ENCODE measurements at regions of chr5 and their contacts with region 1.

Region 1: DNA sequence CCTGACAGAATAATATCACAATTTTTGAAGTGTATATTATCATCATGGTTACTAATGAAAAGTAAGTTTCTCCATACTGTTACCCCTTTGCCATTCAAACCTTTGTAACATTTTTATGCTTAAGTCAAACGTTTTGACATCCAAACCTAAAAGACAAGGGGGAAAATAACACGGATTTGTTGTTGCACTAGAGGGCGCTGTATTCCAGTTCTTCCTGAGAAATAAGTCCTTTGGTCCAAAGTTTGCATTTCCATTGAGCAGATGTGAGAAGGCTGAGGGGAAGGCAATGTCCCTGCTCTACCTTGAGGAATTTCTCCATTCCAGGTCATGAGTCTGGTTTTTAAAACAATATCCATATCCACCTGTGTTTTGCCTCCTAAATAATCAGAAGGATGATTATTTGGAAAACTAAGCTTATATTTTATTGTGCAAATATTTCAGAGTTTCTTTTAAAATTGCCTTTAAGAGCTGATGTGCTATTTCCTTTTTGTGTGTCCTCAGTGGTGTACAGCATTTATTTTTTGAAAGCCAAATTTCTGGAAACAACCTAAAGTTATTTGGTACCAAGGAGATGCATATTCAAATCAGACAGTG is 9.7 kb downstream of the LECT2 start:
- DNase-seq: no peak
- H3K4me3 ChIP-seq: no peak overlapping the region
- H3K27ac ChIP-seq: no peak overlapping the region
- H3K4me1 ChIP-seq: peaks cover 0 to 6% (median 4%) of the 10 kb centered on the region in 4 donors
- H3K27me3 ChIP-seq: no peaks in the 10 kb centered on the region
- CTCF ChIP-seq: peak; percentile 72 to 78 (median 76)
- EP300 ChIP-seq: no peak
- POLR2A ChIP-seq: no peak

Region 2: GRCh38 chr5:135810188-135810943 is 134.7 kb before region 1 on chr5:
- intact Hi-C with region 1: no loop called
- DNase-seq: no peak
- H3K4me3 ChIP-seq: no peak overlapping the region
- H3K27ac ChIP-seq: no peak overlapping the region
- H3K4me1 ChIP-seq: no peaks in the 10 kb centered on the region
- H3K27me3 ChIP-seq: peaks cover 0 to 10% (median 0%) of the 10 kb centered on the region in 4 donors
- CTCF ChIP-seq: no peak
- EP300 ChIP-seq: no peak
- POLR2A ChIP-seq: no peak

Region 3: GRCh38 chr5:135900276-135900675 is 44.8 kb before region 1 on chr5:
- intact Hi-C with region 1: no loop called
- DNase-seq: peak; percentile 70
- H3K4me3 ChIP-seq: no peak overlapping the region
- H3K27ac ChIP-seq: no peak overlapping the region
- H3K4me1 ChIP-seq: no peaks in the 10 kb centered on the region
- H3K27me3 ChIP-seq: peaks cover 0 to 9% (median 0%) of the 10 kb centered on the region in 4 donors
- CTCF ChIP-seq: no peak
- EP300 ChIP-seq: no peak
- POLR2A ChIP-seq: no peak

Region 4: DNA sequence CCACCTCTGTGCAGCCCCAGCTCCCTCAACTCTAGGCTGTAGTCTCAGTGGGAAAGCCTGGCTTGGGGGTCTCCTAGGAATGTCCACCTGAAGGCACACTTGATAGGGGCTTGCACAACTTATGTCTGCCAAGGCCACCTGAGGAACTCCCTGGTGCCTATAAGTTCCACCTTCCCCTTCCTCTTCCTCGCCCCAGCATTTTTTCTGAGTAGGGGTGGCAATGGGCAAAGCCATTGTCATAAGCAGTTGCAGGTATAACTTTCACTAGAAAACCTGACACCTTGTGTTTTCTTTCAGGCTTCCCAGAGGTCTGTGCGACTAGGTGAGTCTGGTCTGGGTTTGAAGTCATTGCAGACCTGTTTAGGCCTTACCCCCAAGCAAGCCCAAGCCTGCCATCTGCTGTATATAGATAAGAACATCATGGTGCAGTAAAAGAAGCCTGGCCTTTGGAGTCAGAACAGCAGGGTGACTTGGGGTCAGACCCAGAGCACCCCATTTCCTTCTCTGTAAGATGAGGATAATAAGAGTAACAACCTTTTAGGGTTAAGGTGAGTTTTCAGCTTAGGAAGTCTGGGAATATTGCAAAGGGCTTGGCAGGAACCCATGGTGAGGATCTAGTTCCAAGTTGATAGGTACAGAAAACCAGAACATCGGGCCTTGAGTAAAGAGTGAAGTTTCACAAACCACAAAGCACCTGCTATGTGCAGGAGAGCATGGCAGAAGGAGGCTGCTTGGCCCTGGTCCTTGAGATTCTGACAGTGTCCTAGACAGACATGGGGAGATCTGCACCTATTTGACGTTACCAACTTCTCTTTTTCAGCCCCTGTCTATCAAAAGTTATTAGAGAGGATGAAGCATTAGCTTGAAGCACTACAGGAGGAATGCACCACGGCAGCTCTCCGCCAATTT is 117.6 kb after region 1 on chr5:
- intact Hi-C with region 1: loop called (anchors 5 kb)
- DNase-seq: no peak
- H3K4me3 ChIP-seq: no peak overlapping the region
- H3K27ac ChIP-seq: peak overlapping the region in 1 of 4 donors; percentile 1
- H3K4me1 ChIP-seq: peaks cover 26 to 63% (median 54%) of the 10 kb centered on the region in 4 donors
- H3K27me3 ChIP-seq: no peaks in the 10 kb centered on the region
- CTCF ChIP-seq: peak; percentile 36 to 57 (median 52)
- EP300 ChIP-seq: no peak
- POLR2A ChIP-seq: no peak

Region 5: GRCh38 chr5:136080483-136081216 is 135.6 kb after region 1 on chr5:
- intact Hi-C with region 1: loop called (anchors 2 kb)
- DNase-seq: peak; percentile 94
- H3K4me3 ChIP-seq: peak overlapping the region; percentile 37 to 60 (median 44)
- H3K27ac ChIP-seq: peak overlapping the region; percentile 77 to 84 (median 82)
- H3K4me1 ChIP-seq: peaks cover 17 to 33% (median 33%) of the 10 kb centered on the region in 4 donors
- H3K27me3 ChIP-seq: no peaks in the 10 kb centered on the region
- CTCF ChIP-seq: no peak
- EP300 ChIP-seq: no peak
- POLR2A ChIP-seq: no peak

Region 6: DNA sequence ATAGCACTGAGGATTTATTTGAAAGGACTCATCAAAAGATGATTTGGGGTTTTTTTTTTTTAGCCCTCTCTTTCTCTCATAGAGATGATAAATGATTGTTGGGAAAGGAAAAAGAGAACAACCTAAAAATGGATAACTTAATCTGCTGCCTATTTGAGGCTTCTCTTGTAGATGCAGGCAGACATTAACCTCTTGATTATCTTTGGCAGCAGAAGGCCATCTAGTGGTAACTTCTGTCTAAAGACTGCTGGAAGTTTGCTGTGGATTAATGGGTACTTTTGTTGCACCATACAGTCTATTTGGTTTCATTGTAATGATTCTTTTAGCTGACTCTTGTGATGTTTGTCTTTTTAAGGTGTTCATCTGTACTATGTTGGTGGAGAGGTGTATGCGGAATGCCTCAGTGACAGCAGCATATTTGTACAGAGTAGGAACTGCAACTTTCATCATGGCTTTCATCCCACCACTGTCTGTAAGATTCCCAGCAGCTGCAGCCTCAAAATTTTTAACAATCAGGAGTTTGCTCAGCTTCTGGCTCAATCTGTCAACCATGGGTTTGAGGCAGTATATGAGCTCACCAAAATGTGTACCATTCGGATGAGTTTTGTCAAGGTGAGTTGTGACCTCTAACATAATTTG is 229.1 kb after region 1 on chr5:
- intact Hi-C with region 1: loop called (anchors 5 kb)
- DNase-seq: no peak
- H3K4me3 ChIP-seq: no peak overlapping the region
- H3K27ac ChIP-seq: no peak overlapping the region
- H3K4me1 ChIP-seq: no peaks in the 10 kb centered on the region
- H3K27me3 ChIP-seq: no peaks in the 10 kb centered on the region
- CTCF ChIP-seq: peak; percentile 41 to 56 (median 47)
- EP300 ChIP-seq: no peak
- POLR2A ChIP-seq: no peak

Region 7: DNA sequence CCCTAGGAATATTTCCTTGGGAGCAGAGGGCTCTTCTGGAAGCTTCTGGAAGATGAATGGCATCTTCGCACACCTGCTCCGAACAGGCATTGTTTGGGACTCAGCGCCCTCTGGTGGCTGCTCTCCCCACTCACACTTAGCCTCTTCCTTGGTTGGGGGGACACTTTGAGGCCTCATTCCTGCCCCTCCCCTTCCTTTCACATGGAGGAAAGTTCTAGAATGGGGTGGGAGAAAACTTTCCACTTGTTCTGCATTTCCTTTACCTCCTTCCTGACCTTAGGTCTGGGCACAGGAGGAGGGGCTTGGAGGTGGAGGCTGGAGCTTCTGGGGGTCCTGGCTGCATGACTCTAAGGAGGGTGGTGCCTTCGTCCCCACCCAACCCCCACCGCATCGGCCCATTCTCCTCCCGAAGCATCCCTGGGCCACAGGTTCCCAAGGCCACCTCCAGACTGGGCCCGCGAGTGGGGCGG is 267.2 kb after region 1 on chr5:
- intact Hi-C with region 1: loop called (anchors 5 kb)
- DNase-seq: no peak
- H3K4me3 ChIP-seq: no peak overlapping the region
- H3K27ac ChIP-seq: no peak overlapping the region
- H3K4me1 ChIP-seq: no peaks in the 10 kb centered on the region
- H3K27me3 ChIP-seq: peaks cover 0 to 12% (median 2%) of the 10 kb centered on the region in 4 donors
- CTCF ChIP-seq: peak; percentile 72 to 87 (median 81)
- EP300 ChIP-seq: no peak
- POLR2A ChIP-seq: no peak